ENCODE measurements at regions of chr1 and their contacts with region 1.

Region 1: DNA sequence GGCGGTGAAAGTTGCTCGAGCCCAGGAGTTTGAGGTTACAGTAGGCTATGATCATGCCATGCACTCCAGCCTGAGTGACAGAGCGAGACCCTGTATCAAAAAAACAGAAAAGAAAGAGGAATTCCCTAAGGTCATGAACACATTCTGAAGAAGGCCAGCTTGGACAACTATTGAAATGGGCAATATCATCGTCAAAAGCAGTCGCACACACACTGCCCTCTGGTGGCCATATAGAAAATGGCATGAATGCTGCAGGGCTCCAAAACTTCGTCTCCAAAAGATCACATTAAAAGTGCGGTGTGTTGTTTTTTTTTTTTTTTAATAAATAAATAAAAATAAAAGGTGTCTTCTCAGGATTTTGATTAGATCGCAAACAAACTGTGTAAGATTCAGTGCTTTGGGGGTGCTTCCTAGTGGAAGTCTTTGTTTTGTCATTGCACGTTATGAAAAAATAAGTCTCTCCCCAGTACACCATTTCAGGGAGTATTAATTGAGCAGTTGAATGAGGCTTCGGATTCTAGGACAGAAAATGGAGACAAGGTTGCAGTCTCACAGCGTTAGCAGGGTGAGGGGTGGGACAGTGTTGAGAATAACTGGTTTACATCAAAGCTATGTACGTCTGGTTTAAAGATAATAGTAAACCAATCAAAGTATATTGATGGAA is 87.5 kb upstream of the FMN2 start:
- DNase-seq: peak; percentile 69
- H3K4me3 Mint-ChIP-seq: no peak overlapping the region
- H3K27ac Mint-ChIP-seq: no peak overlapping the region
- H3K4me1 Mint-ChIP-seq: peaks cover 9% of the 10 kb centered on the region
- H3K27me3 Mint-ChIP-seq: no peaks in the 10 kb centered on the region
- CTCF ChIP-seq: peak; percentile 96

Region 2: DNA sequence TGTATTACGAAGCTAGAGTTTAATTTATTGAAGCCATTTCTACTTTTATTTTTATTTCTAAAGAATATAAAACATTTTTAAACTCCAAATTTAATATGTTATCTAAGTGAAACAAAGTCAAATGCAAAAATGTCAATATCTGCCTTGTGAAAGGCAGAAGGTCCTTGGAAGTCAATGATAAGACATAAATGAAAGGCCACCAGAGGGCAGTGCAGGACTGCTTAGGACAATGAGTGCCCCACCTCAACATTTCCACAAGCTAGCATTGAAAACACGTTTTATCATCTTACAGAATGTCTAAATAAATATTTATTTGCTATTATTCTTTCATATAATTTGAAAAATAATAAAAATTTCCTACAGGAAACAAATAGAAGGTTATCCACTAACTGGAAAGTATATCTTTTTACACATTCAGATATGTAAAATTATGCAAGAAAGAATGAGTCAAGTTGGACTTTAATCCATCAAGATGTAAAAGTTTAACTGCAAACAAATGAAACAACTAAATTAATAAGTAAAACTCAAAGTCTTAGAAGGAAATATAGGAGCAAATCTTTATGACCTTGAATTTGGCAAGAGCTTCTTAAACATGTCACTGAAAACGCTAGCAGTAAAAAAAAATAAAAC is 52.6 kb before region 1 on chr1:
- CTCF ChIA-PET with region 1: interaction called, 96 read pairs
- POLR2A ChIA-PET with region 1: no interaction called
- intact Hi-C with region 1: loop called (anchors 2 kb)
- DNase-seq: peak; percentile 92
- H3K4me3 Mint-ChIP-seq: no peak overlapping the region
- H3K27ac Mint-ChIP-seq: no peak overlapping the region
- H3K4me1 Mint-ChIP-seq: no peaks in the 10 kb centered on the region
- H3K27me3 Mint-ChIP-seq: no peaks in the 10 kb centered on the region
- CTCF ChIP-seq: peak; percentile 95

Region 3: GRCh38 chr1:240021709-240022108 is 17.5 kb after region 1 on chr1:
- CTCF ChIA-PET with region 1: interaction called, 45 read pairs
- POLR2A ChIA-PET with region 1: interaction called, 6 read pairs
- intact Hi-C with region 1: no loop called
- DNase-seq: no peak
- H3K4me3 Mint-ChIP-seq: no peak overlapping the region
- H3K27ac Mint-ChIP-seq: no peak overlapping the region
- H3K4me1 Mint-ChIP-seq: peaks cover under 1% of the 10 kb centered on the region
- H3K27me3 Mint-ChIP-seq: no peaks in the 10 kb centered on the region
- CTCF ChIP-seq: no peak

Region 4: GRCh38 chr1:240155605-240156004 is 151.4 kb after region 1 on chr1:
- CTCF ChIA-PET with region 1: interaction called, 15 read pairs
- POLR2A ChIA-PET with region 1: no interaction called
- intact Hi-C with region 1: no loop called
- DNase-seq: no peak
- H3K4me3 Mint-ChIP-seq: no peak overlapping the region
- H3K27ac Mint-ChIP-seq: no peak overlapping the region
- H3K4me1 Mint-ChIP-seq: no peaks in the 10 kb centered on the region
- H3K27me3 Mint-ChIP-seq: no peaks in the 10 kb centered on the region
- CTCF ChIP-seq: no peak

Measured in MCF 10A (cell line).